Activated T-helper 2 cell treated with anti-CD3 and anti-CD28 coated beads, Interferon-gamma antibody, Interleukin-2, Interleukin-4, amounts not matched to agents 10 μg/mL and 5 μg/mL and 100 μg/mL, durations not matched to agents 14 hours and 24 hours and 36 hours (primary cell): ENCODE measurements at regions of chr1 and their contacts with region 1.

Region 1: DNA sequence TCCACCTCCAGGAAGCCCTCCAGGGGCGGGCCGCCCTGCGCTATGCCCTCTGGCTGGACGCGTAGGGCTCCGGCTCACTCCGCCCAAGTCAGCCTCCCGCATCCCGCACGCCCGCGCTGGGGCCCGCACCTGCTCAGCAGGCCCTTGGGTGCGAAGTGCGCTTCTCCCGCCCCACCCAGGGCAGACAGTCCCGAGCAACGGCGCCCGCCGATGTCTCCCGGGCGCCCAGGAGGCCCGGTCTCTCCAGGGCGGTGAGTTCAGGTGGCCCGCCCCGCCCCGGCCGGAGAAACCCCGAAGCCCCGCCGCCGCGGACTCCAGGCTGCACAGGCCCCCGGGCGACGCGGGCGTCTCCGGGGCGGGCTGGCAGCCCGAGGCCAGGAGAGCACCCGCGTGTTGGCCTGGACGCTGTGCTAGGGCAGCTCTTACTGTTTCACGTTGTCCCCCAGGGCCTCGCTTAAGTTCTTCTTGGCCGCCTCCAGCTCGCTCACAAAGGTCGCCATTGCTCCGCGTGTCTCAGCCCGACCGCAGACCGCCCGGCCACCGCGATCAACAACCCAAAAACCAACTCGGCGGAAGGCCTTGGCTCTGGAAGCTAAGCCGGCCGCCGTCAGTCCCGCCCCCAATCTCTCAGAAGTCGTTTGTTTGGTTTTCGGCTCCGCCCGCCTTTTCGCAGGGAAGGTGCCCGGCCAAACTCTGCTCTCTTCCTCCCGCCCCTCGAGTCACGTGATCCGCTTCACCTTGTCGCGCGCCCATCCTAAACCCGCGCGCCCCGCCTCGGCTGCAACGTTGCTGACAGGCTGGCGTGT is at the start of gene TADA1:
- DNase-seq: peak; percentile 98
- H3K4me3 Mint-ChIP-seq: peak within 1 kb of the TSS; percentile 96
- H3K27ac Mint-ChIP-seq: peak within 1 kb of the TSS; percentile 99
- H3K4me1 Mint-ChIP-seq: peaks cover 45% of the 10 kb centered on the region
- H3K27me3 Mint-ChIP-seq: peaks cover 2% of the 10 kb centered on the region
- total RNA-seq, gene TADA1: 15.3 and 16.0 TPM in 2 replicates

Region 2: DNA sequence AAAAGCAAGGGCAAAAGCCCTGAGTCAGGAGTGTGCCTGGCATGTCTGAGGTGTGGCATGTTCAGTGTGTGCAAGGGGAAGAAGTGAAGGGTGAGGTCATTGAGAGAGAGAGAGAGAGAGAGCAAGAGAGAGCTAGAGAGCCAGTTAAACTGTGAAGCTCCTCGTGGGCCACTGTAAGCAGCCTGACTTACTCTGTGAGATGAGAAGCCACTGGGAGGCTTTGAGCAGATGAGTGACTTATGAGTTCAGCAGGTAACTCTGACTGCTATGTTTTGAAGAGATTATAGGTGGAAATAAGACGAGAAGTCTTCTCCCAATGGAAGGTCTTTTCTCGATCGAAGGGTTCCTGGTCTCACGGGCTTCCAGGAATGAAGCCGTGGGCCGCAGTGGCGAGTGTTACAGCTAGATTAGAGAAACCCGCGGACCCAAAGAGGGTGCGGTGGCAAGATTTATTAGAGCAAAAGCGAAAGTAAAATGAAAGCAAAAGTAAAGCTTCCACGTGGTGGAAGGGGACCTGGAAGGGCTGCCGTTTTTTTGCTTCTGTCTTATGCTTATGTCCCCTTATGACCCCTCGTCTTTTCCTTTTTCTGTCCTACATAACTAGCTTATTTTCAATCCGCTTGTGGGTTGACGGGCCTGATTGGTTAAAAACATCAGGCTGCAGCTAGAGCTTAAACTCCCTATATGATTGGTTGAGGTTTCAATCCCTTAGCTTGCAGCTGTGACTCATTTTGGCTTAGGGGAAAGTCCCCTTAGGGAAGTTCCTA is 386.1 kb before region 1 on chr1:
- intact Hi-C with region 1: loop called (anchors 5 kb)
- DNase-seq: peak; percentile 45
- H3K4me3 Mint-ChIP-seq: no peak overlapping the region
- H3K27ac Mint-ChIP-seq: no peak overlapping the region
- H3K4me1 Mint-ChIP-seq: peaks cover 14% of the 10 kb centered on the region
- H3K27me3 Mint-ChIP-seq: peaks cover 1% of the 10 kb centered on the region

Region 3: GRCh38 chr1:166838766-166839599 is 37.0 kb before region 1 on chr1 and contains the start of gene POGK:
- intact Hi-C with region 1: loop called (anchors 1 kb)
- DNase-seq: peak; percentile 84
- H3K4me3 Mint-ChIP-seq: peak within 1 kb of the TSS; percentile 94
- H3K27ac Mint-ChIP-seq: peak within 1 kb of the TSS; percentile 97
- H3K4me1 Mint-ChIP-seq: peaks cover 52% of the 10 kb centered on the region
- H3K27me3 Mint-ChIP-seq: peaks cover 9% of the 10 kb centered on the region
- total RNA-seq, gene POGK: 46.6 and 49.7 TPM in 2 replicates

Region 4: GRCh38 chr1:166952002-166952746 is 76.2 kb after region 1 on chr1:
- intact Hi-C with region 1: loop called (anchors 5 kb)
- DNase-seq: no peak
- H3K4me3 Mint-ChIP-seq: no peak overlapping the region
- H3K27ac Mint-ChIP-seq: no peak overlapping the region
- H3K4me1 Mint-ChIP-seq: peaks cover 31% of the 10 kb centered on the region
- H3K27me3 Mint-ChIP-seq: peaks cover 21% of the 10 kb centered on the region